GM18951 (cell line): ENCODE measurements at regions of chr17 and their contacts with region 1.

Region 1: DNA sequence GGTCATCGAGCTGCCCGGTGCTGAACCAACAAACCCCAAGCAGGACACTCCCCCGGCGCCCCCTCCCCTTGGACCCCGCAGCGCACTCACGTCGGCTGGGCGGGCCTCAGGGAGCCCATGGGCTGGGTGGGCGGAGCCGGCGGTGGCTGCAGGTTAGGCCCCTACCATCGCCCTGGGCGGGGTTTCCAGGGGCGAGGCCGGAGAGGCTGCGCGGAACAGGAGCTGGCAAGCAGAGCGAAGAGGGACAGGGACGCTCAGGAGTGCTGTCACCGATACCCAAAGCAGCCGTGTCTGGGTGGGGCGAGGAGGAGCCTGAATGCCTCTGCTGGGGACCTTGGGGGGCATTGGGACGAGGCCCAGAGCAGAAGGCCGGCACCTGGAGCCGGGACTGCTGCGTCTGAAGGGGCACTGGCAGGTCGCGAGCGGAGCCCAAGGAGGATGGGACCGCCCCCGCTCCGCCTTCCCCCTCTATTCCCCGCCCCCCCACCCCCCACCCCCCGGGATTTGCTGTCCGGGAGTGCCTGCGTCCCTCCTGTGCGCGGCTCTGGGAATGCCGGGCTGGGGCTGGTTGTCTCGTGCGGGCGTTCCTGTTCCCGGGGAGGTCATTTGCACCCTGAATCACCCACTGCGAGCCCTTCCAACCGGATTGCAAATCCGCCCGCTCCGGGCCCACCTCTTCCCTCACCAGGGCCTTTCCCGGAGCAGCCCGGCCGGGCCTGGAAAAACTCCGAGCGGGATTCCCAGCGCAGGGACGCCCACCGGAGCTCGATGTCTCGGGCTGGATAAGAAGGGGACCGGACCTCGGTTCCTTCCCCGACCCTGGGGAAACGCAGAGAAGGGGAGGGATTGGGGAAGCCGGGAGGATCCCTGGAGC is 902 bp downstream of the ARHGAP27 start:
- POLR2A ChIP-seq: peak; percentile 62

Region 2: GRCh38 chr17:45584092-45585036 is 152.6 kb after region 1 on chr17:
- in situ Hi-C with region 1: loop called (anchors 10 kb)
- POLR2A ChIP-seq: peak; percentile 61